GM12878 (cell line): ENCODE measurements at regions of chr10 and their contacts with region 1.

Region 1: DNA sequence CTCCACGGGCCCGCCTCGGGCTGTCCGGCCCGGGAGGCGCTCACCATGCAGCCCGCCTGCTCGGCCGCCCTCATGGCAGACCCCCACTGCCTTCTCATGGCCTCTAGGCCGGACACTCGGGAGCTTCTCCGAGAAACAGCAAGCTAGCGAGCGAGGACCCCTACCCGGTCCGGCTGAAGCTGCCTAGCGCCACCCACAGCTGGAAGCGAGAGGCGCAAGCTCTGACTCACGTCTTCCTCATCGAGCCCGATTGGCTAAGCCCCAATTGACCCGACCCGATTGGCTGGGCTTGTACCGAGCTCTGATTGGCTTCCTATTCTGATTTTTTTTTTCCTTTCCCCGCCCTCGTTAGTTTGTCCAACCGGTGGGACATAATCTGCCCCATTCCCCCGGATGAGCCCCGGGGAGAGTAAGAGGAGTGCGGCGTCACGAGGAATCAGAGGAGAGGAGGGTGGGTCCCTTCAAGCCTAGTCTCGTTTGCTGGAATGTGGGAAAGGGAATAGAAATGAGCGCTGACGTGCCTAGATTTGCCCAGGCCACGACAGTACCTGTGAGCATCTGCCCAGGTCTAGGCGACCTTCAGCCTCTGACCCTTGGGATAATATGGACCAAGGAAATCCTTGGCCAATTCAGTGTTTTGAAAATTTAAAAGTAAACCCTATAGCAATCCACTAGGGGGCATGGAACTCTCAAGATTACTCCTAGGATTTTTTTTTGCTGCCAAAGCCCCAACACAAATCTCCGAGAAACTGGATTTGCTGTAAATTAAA is at the start of gene TYSND1:
- DNase-seq: peak; percentile 91
- ATAC-seq: peak; percentile 92
- H3K4me3 ChIP-seq: peak within 1 kb of the TSS; percentile 88
- H3K27ac ChIP-seq: peak within 1 kb of the TSS; percentile 85
- H3K4me1 ChIP-seq: peaks cover 3% of the 10 kb centered on the region; the same call in 1 of the 2 replicates
- H3K27me3 ChIP-seq: no peaks in the 10 kb centered on the region
- CTCF ChIP-seq: peak; percentile 89 to 95 (median 92)
- EP300 ChIP-seq: no peak
- POLR2A ChIP-seq: peak; percentile 90
- RAD21 ChIP-seq: peak; percentile 67
- polyA plus RNA-seq, gene TYSND1: 1.9 to 4.5 TPM

Region 2: DNA sequence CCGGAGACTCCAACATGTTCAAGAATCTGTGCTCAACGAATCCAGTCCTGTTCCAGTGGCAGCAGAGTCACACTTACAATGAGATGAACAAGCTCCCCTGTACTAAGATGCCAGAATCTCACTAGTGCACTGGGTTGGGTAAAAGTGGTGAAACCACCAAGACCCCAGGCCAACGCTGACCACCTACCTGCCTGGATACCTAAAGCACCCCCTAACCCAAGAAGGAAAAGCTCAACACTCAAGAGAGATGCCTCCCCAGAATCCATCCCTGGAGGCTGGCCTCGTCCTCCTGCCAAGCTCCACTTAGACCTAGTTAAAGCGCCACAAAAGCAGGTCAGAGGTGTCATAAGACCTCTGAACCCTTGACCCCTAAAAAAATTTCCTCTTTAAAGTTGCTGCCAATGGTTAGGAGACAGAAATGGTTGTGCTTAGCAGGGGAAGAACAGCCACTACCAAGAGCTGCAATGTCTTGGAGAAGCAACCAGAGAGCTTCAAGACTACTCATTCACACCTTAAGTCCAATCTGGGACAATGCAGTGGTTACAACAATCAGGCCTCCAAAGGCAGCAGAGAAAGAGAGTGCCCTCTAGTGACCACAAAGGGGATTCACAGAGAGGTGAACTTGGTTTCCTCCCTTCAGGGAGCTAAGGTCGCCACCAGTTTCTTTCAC is 188.7 kb before region 1 on chr10:
- CTCF ChIA-PET with region 1: interaction called, 18 read pairs
- POLR2A ChIA-PET with region 1: no interaction called
- RAD21 ChIA-PET with region 1: interaction called, 24 read pairs
- SMC1A ChIA-PET with region 1: interaction called, 5 read pairs
- in situ Hi-C with region 1: no loop called
- intact Hi-C with region 1: no loop called
- DNase-seq: no peak
- ATAC-seq: peak; percentile 81
- H3K4me3 ChIP-seq: no peak overlapping the region
- H3K27ac ChIP-seq: no peak overlapping the region
- H3K4me1 ChIP-seq: peaks cover 9% of the 10 kb centered on the region
- H3K27me3 ChIP-seq: peaks cover 0 to 2% of the 10 kb centered on the region in 2 experiments; a peak in 2 of 4 replicates
- CTCF ChIP-seq: peak; percentile 84 to 91 (median 90)
- EP300 ChIP-seq: no peak
- POLR2A ChIP-seq: no peak
- RAD21 ChIP-seq: peak; percentile 83

Region 3: GRCh38 chr10:70106958-70107791 is 39.5 kb before region 1 on chr10:
- CTCF ChIA-PET with region 1: interaction called, 23 read pairs
- POLR2A ChIA-PET with region 1: no interaction called
- RAD21 ChIA-PET with region 1: interaction called, 10 read pairs
- SMC1A ChIA-PET with region 1: interaction called, 17 read pairs
- in situ Hi-C with region 1: no loop called
- intact Hi-C with region 1: no loop called
- DNase-seq: peak; percentile 80
- ATAC-seq: peak; percentile 97
- H3K4me3 ChIP-seq: peak overlapping the region; percentile 8; the same call in 1 of the 2 replicates
- H3K27ac ChIP-seq: peak overlapping the region; percentile 56
- H3K4me1 ChIP-seq: peaks cover 18% of the 10 kb centered on the region
- H3K27me3 ChIP-seq: no peaks in the 10 kb centered on the region
- CTCF ChIP-seq: peak; percentile 38 to 66 (median 62)
- EP300 ChIP-seq: peak; percentile 40 to 69; a peak in 2 of 4 replicates
- POLR2A ChIP-seq: no peak; the same call in 1 of the 2 replicates
- RAD21 ChIP-seq: 0 out of 2 replicates have a peak, but pooled peaks have one; percentile 12

Region 4: DNA sequence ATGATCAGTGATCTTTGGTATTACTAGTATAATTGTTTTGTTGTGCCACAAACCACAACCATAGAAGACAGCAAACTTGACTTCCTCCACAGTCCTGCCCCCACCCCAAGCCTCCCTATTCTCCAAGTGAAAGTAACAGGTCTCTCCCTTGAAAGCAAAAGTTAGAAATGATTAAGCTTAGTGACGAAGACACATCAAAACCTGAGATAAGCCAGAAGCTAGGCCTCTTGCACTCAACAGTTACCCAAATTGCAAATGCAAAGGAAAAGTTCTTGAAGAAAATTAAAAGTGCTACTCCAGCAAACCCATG is 16.2 kb after region 1 on chr10:
- CTCF ChIA-PET with region 1: interaction called, 56 read pairs
- POLR2A ChIA-PET with region 1: interaction called, 18 read pairs
- RAD21 ChIA-PET with region 1: interaction called, 30 read pairs
- SMC1A ChIA-PET with region 1: interaction called, 23 read pairs
- in situ Hi-C with region 1: no loop called
- intact Hi-C with region 1: no loop called
- DNase-seq: peak; percentile 43
- ATAC-seq: peak; percentile 92
- H3K4me3 ChIP-seq: no peak overlapping the region; the same call in 1 of the 2 replicates
- H3K27ac ChIP-seq: no peak overlapping the region
- H3K4me1 ChIP-seq: peaks cover 21% of the 10 kb centered on the region
- H3K27me3 ChIP-seq: no peaks in the 10 kb centered on the region
- CTCF ChIP-seq: no peak
- EP300 ChIP-seq: no peak
- POLR2A ChIP-seq: no peak
- RAD21 ChIP-seq: no peak

Region 5: DNA sequence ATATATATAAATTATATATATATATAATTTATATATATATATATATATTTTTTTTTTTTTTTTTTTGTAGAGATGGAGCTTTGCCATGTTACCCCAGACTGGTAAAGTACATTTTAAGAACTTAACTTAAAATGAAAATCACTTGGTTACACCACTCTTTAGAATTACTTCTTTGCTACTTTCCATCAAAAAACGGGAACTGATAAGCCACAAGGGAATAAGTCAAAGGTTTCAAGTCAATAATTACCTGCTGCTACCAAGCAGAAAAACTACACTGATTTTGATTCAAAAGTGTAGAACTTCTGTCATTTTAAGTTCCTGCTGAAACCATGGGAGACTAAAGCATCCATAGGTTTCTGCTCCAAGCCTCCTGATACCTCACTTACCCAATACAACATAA is 74.4 kb after region 1 on chr10:
- CTCF ChIA-PET with region 1: interaction called, 26 read pairs
- POLR2A ChIA-PET with region 1: interaction called, 3 read pairs
- RAD21 ChIA-PET with region 1: interaction called, 22 read pairs
- SMC1A ChIA-PET with region 1: interaction called, 8 read pairs
- in situ Hi-C with region 1: no loop called
- intact Hi-C with region 1: no loop called
- DNase-seq: no peak
- ATAC-seq: peak; percentile 41
- H3K4me3 ChIP-seq: peak overlapping the region; percentile 14; the same call in 1 of the 2 replicates
- H3K27ac ChIP-seq: peak overlapping the region; percentile 52; the same call in 1 of the 2 replicates
- H3K4me1 ChIP-seq: peaks cover 21% of the 10 kb centered on the region
- H3K27me3 ChIP-seq: no peaks in the 10 kb centered on the region
- CTCF ChIP-seq: no peak
- EP300 ChIP-seq: no peak
- POLR2A ChIP-seq: no peak
- RAD21 ChIP-seq: no peak

Region 6: GRCh38 chr10:70355051-70356021 is 208.7 kb after region 1 on chr10:
- CTCF ChIA-PET with region 1: interaction called, 15 read pairs
- POLR2A ChIA-PET with region 1: no interaction called
- RAD21 ChIA-PET with region 1: interaction called, 11 read pairs
- SMC1A ChIA-PET with region 1: interaction called, 5 read pairs
- in situ Hi-C with region 1: no loop called
- intact Hi-C with region 1: no loop called
- DNase-seq: peak; percentile 94
- ATAC-seq: peak; percentile 79
- H3K4me3 ChIP-seq: peak overlapping the region; percentile 36
- H3K27ac ChIP-seq: peak overlapping the region; percentile 88
- H3K4me1 ChIP-seq: peaks cover 51% of the 10 kb centered on the region
- H3K27me3 ChIP-seq: no peaks in the 10 kb centered on the region
- CTCF ChIP-seq: no peak
- EP300 ChIP-seq: peak; percentile 52 to 98
- POLR2A ChIP-seq: peak; percentile 46
- RAD21 ChIP-seq: no peak